ENCODE measurements at regions of chr18 and their contacts with region 1.

Region 1: GRCh38 chr18:6920099-6920899 is 190.8 kb downstream of the ARHGAP28 start:
- DNase-seq: no peak
- H3K4me3 ChIP-seq: no peak overlapping the region
- H3K27ac ChIP-seq: no peak overlapping the region
- H3K4me1 ChIP-seq: no peaks in the 10 kb centered on the region
- H3K27me3 ChIP-seq: no peaks in the 10 kb centered on the region
- CTCF ChIP-seq: peak; percentile 19 to 83 (median 56)
- POLR2A ChIP-seq: no peak

Region 2: DNA sequence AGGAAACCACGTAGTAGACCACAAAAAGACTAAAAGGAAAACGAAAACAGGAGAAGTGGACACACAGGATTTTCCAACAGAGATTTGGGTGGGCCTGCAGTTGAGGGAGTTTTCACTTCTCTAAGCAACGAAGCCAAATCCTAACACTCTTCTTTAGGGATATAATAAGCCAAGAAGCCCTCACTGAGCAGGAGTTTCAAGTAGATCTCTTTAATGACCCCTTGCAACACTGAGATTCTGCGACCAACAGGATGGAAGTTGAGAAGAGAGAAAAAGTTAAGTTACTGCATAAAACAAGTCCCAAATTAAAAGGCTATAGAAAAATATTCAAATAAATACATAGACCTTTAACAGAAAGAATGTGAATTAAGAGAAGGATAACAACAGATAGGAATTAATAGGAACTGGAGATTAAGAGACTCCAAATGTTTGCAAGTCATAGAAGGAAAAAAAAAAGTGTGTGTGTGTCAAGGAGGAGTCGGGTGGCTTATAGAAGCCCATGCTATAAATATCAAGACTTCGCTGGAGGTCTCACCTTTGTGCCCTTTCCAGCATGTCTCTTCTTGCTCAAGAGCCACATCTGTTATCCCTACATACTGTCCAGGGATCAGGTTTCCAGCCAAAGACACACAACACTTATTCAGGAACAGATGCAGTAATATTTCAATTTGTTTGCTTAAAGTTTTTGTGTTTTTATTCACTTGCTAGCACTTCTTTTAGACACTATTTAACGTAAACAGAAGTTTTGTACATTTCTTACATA is 260.2 kb before region 1 on chr18:
- intact Hi-C with region 1: no loop called
- DNase-seq: no peak
- H3K4me3 ChIP-seq: no peak overlapping the region
- H3K27ac ChIP-seq: no peak overlapping the region
- H3K4me1 ChIP-seq: no peaks in the 10 kb centered on the region
- H3K27me3 ChIP-seq: no peaks in the 10 kb centered on the region
- CTCF ChIP-seq: no peak
- POLR2A ChIP-seq: no peak

Region 3: GRCh38 chr18:6747646-6748045 is 172.7 kb before region 1 on chr18:
- intact Hi-C with region 1: no loop called
- DNase-seq: no peak
- H3K4me3 ChIP-seq: no peak overlapping the region
- H3K27ac ChIP-seq: peak overlapping the region in 1 of 4 donors; percentile 23
- H3K4me1 ChIP-seq: peaks cover 0 to 18% (median 3%) of the 10 kb centered on the region in 3 donors
- H3K27me3 ChIP-seq: no peaks in the 10 kb centered on the region
- CTCF ChIP-seq: no peak
- POLR2A ChIP-seq: no peak

Region 4: GRCh38 chr18:6980363-6980762 is 60.1 kb after region 1 on chr18:
- intact Hi-C with region 1: no loop called
- DNase-seq: no peak
- H3K4me3 ChIP-seq: no peak overlapping the region
- H3K27ac ChIP-seq: no peak overlapping the region
- H3K4me1 ChIP-seq: no peaks in the 10 kb centered on the region
- H3K27me3 ChIP-seq: no peaks in the 10 kb centered on the region
- CTCF ChIP-seq: no peak
- POLR2A ChIP-seq: no peak

Region 5: DNA sequence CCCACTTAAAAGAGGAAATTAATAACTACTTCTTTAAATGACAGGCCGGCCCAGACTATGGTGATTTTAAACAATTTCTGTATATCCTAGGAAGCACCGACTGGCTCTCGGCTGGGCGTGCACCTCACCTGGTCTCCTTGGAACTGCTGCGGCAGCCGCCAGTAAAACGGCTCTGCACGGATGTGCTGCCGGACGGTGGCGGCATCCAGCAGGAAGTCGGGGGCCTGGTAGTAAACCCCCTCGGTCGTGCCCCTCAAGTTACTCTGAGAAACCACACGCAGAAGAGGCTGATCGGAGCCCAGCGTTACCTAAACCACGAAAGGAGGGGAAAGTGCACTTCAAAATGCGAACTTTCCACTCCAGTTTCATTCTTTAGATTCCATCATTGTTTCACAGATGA is 90.9 kb after region 1 on chr18:
- intact Hi-C with region 1: no loop called
- DNase-seq: no peak
- H3K4me3 ChIP-seq: no peak overlapping the region
- H3K27ac ChIP-seq: no peak overlapping the region
- H3K4me1 ChIP-seq: no peaks in the 10 kb centered on the region
- H3K27me3 ChIP-seq: no peaks in the 10 kb centered on the region
- CTCF ChIP-seq: no peak
- POLR2A ChIP-seq: no peak

Region 6: GRCh38 chr18:7021994-7022840 is 101.9 kb after region 1 on chr18:
- intact Hi-C with region 1: loop called (anchors 10 kb)
- DNase-seq: no peak
- H3K4me3 ChIP-seq: no peak overlapping the region
- H3K27ac ChIP-seq: no peak overlapping the region
- H3K4me1 ChIP-seq: no peaks in the 10 kb centered on the region
- H3K27me3 ChIP-seq: no peaks in the 10 kb centered on the region
- CTCF ChIP-seq: peak in 5 of 6 experiments; percentile 23 to 68 (median 53)
- POLR2A ChIP-seq: no peak

Region 7: DNA sequence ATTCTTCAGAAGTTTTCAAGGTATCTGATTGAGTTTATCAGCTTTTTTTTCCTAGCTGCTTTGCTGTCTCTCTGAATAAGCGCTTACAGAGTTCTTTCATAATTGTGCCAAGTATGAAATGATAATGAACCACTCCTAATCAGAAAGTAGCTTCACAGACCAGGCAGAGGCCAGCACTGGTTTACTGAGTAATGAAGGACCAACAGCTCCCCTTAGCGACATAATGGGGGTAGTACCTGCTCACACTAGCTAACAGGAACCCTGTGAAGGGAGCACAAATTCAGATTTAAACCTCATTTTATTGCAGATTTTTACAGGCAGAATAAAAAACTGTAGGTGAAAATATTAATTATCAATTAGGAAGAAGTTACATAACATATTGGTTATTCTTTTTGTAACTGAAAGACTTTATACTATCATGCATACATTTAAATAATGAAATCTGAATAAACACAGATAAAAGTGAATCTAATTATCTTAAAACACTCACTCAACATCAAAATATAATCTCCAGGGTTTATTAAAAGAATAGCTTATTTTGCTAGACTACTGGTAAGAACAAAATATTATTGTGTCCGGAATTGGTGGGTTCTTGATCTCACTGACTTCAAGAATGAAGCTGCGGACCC is 256.9 kb after region 1 on chr18:
- intact Hi-C with region 1: loop called (anchors 10 kb)
- DNase-seq: no peak
- H3K4me3 ChIP-seq: no peak overlapping the region
- H3K27ac ChIP-seq: no peak overlapping the region
- H3K4me1 ChIP-seq: no peaks in the 10 kb centered on the region
- H3K27me3 ChIP-seq: peaks cover 0 to 7% (median 0%) of the 10 kb centered on the region in 4 donors
- CTCF ChIP-seq: peak; percentile 13 to 74 (median 54)
- POLR2A ChIP-seq: no peak

Measured in esophagus squamous epithelium (tissue), 5 donors.